CD8-positive, alpha-beta memory T cell (primary cell): ENCODE measurements at regions of chr3 and their contacts with region 1.

Region 1: GRCh38 chr3:69051756-69052471 is at the start of gene TMF1:
- DNase-seq: peak; percentile 97 to 99 (median 98)
- H3K4me3 ChIP-seq: peak within 1 kb of the TSS; percentile 75
- H3K4me3 Mint-ChIP-seq: peak within 1 kb of the TSS; percentile 94 to 99 (median 97)
- H3K27ac ChIP-seq: peak within 1 kb of the TSS; percentile 99
- H3K27ac Mint-ChIP-seq: peak within 1 kb of the TSS; percentile 95 to 100 (median 98)
- H3K4me1 ChIP-seq: peaks cover 30% of the 10 kb centered on the region
- H3K4me1 Mint-ChIP-seq: peaks cover 46 to 60% (median 59%) of the 10 kb centered on the region in 3 donors
- H3K27me3 ChIP-seq: no peaks in the 10 kb centered on the region
- H3K27me3 Mint-ChIP-seq: peaks cover 0 to 4% of the 10 kb centered on the region in 2 donors
- total RNA-seq, gene TMF1: 31.8 to 35.6 TPM

Region 2: GRCh38 chr3:69084326-69085167 is 32.6 kb after region 1 on chr3 and contains the start of gene ARL6IP5:
- CTCF ChIA-PET with region 1: interaction called, 5 read pairs
- POLR2A ChIA-PET with region 1: interaction called, 15 read pairs
- DNase-seq: peak; percentile 84 to 93 (median 87)
- H3K4me3 ChIP-seq: peak within 1 kb of the TSS; percentile 67
- H3K4me3 Mint-ChIP-seq: peak within 1 kb of the TSS; percentile 93 to 99 (median 96)
- H3K27ac ChIP-seq: peak within 1 kb of the TSS; percentile 77
- H3K27ac Mint-ChIP-seq: peak within 1 kb of the TSS; percentile 89 to 99 (median 98)
- H3K4me1 ChIP-seq: peaks cover 69% of the 10 kb centered on the region
- H3K4me1 Mint-ChIP-seq: peaks cover 71 to 78% (median 75%) of the 10 kb centered on the region in 3 donors
- H3K27me3 ChIP-seq: no peaks in the 10 kb centered on the region
- H3K27me3 Mint-ChIP-seq: no peaks in the 10 kb centered on the region
- total RNA-seq, gene ARL6IP5: 121 to 124 TPM

Region 3: GRCh38 chr3:69092030-69092516 is 40.2 kb after region 1 on chr3:
- CTCF ChIA-PET with region 1: interaction called, 10 read pairs
- POLR2A ChIA-PET with region 1: interaction called, 11 read pairs
- DNase-seq: peak in 2 of 5 donors; percentile 49 to 68
- H3K4me3 ChIP-seq: peak overlapping the region; percentile 19
- H3K4me3 Mint-ChIP-seq: peak overlapping the region; percentile 58 to 81 (median 76)
- H3K27ac ChIP-seq: peak overlapping the region; percentile 60
- H3K27ac Mint-ChIP-seq: peak overlapping the region; percentile 79 to 99 (median 94)
- H3K4me1 ChIP-seq: peaks cover 98% of the 10 kb centered on the region
- H3K4me1 Mint-ChIP-seq: peaks cover 84 to 98% (median 94%) of the 10 kb centered on the region in 3 donors
- H3K27me3 ChIP-seq: no peaks in the 10 kb centered on the region
- H3K27me3 Mint-ChIP-seq: no peaks in the 10 kb centered on the region

Region 4: GRCh38 chr3:69174871-69175737 is 123.2 kb after region 1 on chr3:
- CTCF ChIA-PET with region 1: no interaction called
- POLR2A ChIA-PET with region 1: no interaction called
- DNase-seq: no peak
- H3K4me3 ChIP-seq: no peak overlapping the region
- H3K4me3 Mint-ChIP-seq: no peak overlapping the region
- H3K27ac ChIP-seq: no peak overlapping the region
- H3K27ac Mint-ChIP-seq: no peak overlapping the region
- H3K4me1 ChIP-seq: no peaks in the 10 kb centered on the region
- H3K4me1 Mint-ChIP-seq: peaks cover 8 to 11% (median 10%) of the 10 kb centered on the region in 3 donors
- H3K27me3 ChIP-seq: no peaks in the 10 kb centered on the region
- H3K27me3 Mint-ChIP-seq: peaks cover 0 to 1% of the 10 kb centered on the region in 2 donors